ENCODE measurements at regions of chr7 and their contacts with region 1.

Region 1: GRCh38 chr7:56063882-56064625 is at the start of gene SUMF2:
- DNase-seq: peak; percentile 90 to 97
- H3K4me3 ChIP-seq: peak within 1 kb of the TSS; percentile 69
- H3K27ac ChIP-seq: peak within 1 kb of the TSS; percentile 71
- H3K4me1 ChIP-seq: peaks cover 58% of the 10 kb centered on the region
- H3K27me3 ChIP-seq: no peaks in the 10 kb centered on the region
- CTCF ChIP-seq: peak; percentile 49; the same call in 1 of the 2 replicates
- total RNA-seq, gene SUMF2: 256 and 305 TPM in 2 replicates

Region 2: DNA sequence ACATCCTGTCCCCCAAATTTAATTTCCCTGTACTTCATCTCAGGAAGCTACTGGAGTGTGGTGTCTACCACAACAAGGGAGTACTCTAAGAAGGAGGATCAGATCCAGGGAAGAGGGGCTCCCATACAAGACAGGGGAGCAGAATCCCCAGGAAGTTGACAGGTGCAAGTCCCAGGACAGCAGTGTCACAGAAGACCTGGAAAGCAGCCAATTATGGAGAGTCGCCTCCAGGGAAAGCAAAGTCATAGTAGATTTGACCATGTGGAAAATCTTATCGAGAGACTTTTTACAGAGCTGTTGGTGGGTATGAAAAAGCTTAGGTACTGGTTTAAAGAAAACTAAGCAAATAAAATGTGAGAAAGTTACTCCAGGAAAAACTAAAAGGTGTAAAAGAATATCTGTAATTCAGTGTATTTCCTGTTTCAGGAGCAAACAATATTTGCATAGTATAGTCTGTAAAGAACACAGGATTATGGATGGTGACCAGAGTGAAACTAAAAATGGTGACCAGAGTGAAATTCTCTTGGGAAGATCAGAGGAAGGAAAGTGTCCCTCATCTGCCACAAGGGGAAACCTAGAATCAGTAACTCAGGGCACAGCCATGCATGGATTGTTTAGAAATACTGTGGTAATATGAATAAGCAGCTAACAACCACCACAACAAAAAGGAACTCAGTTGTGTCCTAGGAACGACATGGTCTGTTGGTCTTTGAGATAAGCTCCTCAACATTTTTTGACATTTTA is 654.4 kb before region 1 on chr7:
- CTCF ChIA-PET with region 1: no interaction called
- POLR2A ChIA-PET with region 1: interaction called, 16 read pairs
- intact Hi-C with region 1: no loop called
- DNase-seq: no peak
- H3K4me3 ChIP-seq: no peak overlapping the region
- H3K27ac ChIP-seq: no peak overlapping the region
- H3K4me1 ChIP-seq: no peaks in the 10 kb centered on the region
- H3K27me3 ChIP-seq: no peaks in the 10 kb centered on the region
- CTCF ChIP-seq: peak; percentile 43

Region 3: DNA sequence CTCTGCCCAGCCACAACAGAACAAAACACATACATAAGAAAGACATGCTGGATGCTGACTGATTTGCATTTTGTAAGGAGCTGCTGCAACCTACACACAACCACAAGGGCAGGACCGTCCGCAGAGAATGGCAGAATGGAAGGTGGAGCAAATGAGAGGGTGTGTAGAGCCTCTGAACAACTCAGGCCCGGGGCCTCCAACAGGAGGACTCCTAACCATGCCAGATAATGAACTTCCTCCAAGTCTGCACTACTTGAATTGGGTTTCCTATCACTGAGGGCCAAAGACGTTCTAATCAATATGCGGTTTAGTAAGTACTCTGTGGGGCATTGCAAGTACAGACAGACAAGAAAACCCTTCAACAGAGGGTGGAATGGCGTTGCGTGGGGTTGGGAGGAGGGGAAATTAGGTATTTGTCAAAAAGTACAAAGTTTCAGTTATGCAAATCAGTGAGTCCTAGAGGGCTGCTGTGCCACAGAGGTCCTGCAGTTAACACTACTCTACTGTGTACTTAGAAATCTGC is 506.3 kb before region 1 on chr7:
- CTCF ChIA-PET with region 1: no interaction called
- POLR2A ChIA-PET with region 1: no interaction called
- intact Hi-C with region 1: loop called (anchors 5 kb)
- DNase-seq: no peak
- H3K4me3 ChIP-seq: no peak overlapping the region
- H3K27ac ChIP-seq: peak overlapping the region; percentile 82
- H3K4me1 ChIP-seq: peaks cover 81% of the 10 kb centered on the region
- H3K27me3 ChIP-seq: no peaks in the 10 kb centered on the region
- CTCF ChIP-seq: no peak

Region 4: DNA sequence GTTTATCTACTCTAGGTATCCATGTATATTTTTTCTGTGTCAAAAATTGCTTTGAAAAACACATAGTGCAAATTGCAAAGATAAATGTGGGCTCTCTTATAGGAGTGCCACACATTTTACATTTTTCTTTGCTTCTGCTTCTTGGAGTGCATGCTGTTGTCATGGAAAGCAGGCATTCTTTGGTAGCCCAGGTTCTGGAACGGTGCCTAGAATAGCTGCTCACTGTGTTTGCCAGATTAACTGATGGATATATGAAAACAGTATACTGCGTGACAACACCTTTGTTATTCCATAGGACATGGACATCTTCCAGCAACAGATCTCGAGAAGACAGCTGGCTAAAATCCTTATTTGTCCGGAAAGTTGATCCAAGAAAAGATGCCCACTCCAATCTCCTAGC is 86.2 kb before region 1 on chr7:
- CTCF ChIA-PET with region 1: no interaction called
- POLR2A ChIA-PET with region 1: interaction called, 17 read pairs
- intact Hi-C with region 1: no loop called
- DNase-seq: no peak
- H3K4me3 ChIP-seq: no peak overlapping the region
- H3K27ac ChIP-seq: no peak overlapping the region
- H3K4me1 ChIP-seq: 0 out of 2 replicates have a peak, but pooled peaks cover 3% of the 10 kb centered on the region
- H3K27me3 ChIP-seq: no peaks in the 10 kb centered on the region
- CTCF ChIP-seq: no peak

Region 5: GRCh38 chr7:56051339-56052191 is 12.5 kb before region 1 on chr7 and contains the starts of genes CCT6A and PSPH:
- CTCF ChIA-PET with region 1: interaction called, 3 read pairs
- POLR2A ChIA-PET with region 1: interaction called, 63 read pairs
- intact Hi-C with region 1: loop called (anchors 1 kb)
- DNase-seq: peak; percentile 100
- H3K4me3 ChIP-seq: peak within 1 kb of the TSS; percentile 97
- H3K27ac ChIP-seq: peak within 1 kb of the TSS; percentile 78
- H3K4me1 ChIP-seq: peaks cover 40% of the 10 kb centered on the region
- H3K27me3 ChIP-seq: no peaks in the 10 kb centered on the region
- CTCF ChIP-seq: no peak
- total RNA-seq, gene CCT6A: 308 and 323 TPM in 2 replicates
- total RNA-seq, gene PSPH: 89.5 and 103 TPM in 2 replicates

Region 6: DNA sequence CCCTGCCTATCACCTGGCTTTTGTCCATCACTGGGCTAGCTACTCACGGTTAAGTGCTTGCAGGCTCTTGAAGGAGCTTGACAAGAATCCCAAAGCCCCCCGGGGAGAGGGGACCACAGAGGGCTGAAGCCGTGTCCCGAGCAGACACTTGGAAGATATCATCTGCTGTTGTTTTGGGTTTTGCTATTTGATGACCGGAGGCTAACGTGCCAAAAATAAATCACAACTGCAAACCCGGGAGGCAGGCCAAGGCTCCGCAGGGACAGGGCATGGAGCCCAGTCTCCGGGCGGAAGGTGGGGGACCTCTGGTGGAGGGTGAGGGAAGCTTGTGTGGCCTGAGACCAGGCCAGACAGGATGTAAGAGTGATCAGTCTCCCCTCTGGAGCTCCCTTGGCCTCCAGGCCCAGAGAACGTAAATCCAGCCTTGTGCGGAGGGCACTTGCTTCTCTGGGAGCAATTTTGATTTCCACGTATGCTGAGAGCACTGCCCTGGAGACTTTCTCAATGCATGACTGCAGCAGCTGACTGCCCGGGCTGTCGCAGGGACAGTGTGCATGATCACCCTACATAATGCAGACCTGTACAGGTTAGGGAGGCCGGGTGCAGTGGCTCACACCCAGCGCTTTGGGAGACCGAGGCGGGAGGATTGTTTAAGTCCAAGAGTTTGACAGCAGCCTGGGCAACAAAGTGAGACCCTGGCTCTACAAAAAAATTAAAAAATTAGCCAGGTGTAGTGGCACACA is 28.9 kb after region 1 on chr7 and contains the start of gene PHKG1:
- CTCF ChIA-PET with region 1: interaction called, 3 read pairs
- POLR2A ChIA-PET with region 1: interaction called, 18 read pairs
- intact Hi-C with region 1: no loop called
- DNase-seq: peak in 1 of 2 experiments; percentile 52
- H3K4me3 ChIP-seq: no peak within 1 kb of the TSS
- H3K27ac ChIP-seq: no peak within 1 kb of the TSS
- H3K4me1 ChIP-seq: no peaks in the 10 kb centered on the region
- H3K27me3 ChIP-seq: no peaks in the 10 kb centered on the region
- CTCF ChIP-seq: 0 out of 2 replicates have a peak, but pooled peaks have one; percentile 40
- total RNA-seq, gene PHKG1: 2.7 and 3.9 TPM in 2 replicates

Region 7: DNA sequence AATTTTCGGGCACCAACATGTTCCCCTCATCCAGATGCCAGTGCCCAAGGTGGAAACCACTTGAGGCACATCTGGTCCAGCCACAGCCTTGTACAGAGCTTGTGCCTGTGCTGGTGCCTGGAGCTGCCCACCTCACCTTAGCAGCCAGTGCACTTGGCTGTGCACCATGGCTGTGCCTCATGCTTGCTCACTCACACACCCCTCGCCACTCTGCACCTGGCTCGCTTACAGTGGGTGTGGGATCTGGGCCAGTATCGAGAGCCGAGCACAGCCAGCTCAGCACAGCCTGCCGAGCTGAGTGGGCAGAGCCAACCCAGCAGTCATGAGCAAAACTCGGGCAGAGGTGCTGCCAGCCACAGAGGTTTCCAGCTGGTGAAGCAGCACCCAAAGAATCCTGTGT is 192.1 kb after region 1 on chr7:
- CTCF ChIA-PET with region 1: no interaction called
- POLR2A ChIA-PET with region 1: no interaction called
- intact Hi-C with region 1: no loop called
- DNase-seq: no peak
- H3K4me3 ChIP-seq: no peak overlapping the region
- H3K27ac ChIP-seq: no peak overlapping the region
- H3K4me1 ChIP-seq: no peaks in the 10 kb centered on the region
- H3K27me3 ChIP-seq: no peaks in the 10 kb centered on the region
- CTCF ChIP-seq: no peak